GM12878 (cell line): ENCODE measurements at regions of chr19 and their contacts with region 1.

Region 1: GRCh38 chr19:38335949-38336637 is 463 bp downstream of the CATSPERG start:
- DNase-seq: peak; percentile 80
- ATAC-seq: peak; percentile 90
- H3K4me3 ChIP-seq: peak overlapping the region; percentile 79
- H3K27ac ChIP-seq: peak overlapping the region; percentile 91
- H3K4me1 ChIP-seq: peaks cover 3% of the 10 kb centered on the region; the same call in 1 of the 2 replicates
- H3K27me3 ChIP-seq: no peaks in the 10 kb centered on the region
- CTCF ChIP-seq: no peak
- EP300 ChIP-seq: no peak
- POLR2A ChIP-seq: peak; percentile 69; the same call in 1 of the 2 replicates
- RAD21 ChIP-seq: no peak

Region 2: DNA sequence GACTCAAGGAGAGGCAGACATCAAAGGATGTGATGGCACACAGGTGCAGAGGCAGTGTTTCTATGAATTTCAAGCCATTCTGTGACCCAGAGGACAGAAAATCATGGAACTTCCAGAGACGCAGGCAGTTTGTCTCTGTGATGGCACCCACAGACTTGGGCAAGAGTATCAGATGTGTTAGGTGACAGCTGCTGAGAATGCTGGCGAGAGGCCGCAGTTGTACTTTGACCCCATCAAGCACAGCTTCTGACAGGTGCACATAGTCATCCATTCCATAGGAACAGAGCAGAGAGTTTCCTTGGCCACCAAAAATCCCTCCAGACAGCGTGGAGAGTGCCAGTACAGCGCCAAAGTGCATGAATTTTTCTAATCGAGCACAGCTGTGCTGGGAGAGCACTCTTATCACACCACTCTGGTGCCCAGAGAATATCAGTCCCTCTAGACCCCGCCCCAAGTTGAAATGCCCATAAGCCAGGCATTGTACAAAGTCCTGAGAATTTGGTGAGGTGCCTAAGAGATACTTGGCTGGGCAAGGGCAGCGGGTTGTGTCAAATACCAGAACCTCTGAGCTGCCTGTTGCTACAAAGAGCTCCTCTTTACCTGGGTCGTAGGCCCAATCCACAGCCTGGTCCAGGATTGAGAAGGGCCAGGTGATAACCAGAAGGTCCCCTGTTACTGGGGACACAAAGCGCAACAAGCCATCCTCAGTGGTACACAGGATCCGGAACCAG is 442.1 kb before region 1 on chr19:
- CTCF ChIA-PET with region 1: interaction called, 4 read pairs
- POLR2A ChIA-PET with region 1: no interaction called
- RAD21 ChIA-PET with region 1: interaction called, 4 read pairs
- SMC1A ChIA-PET with region 1: interaction called, 3 read pairs
- in situ Hi-C with region 1: loop called (anchors 5 kb)
- intact Hi-C with region 1: no loop called
- DNase-seq: no peak
- ATAC-seq: no peak
- H3K4me3 ChIP-seq: no peak overlapping the region
- H3K27ac ChIP-seq: no peak overlapping the region
- H3K4me1 ChIP-seq: no peaks in the 10 kb centered on the region
- H3K27me3 ChIP-seq: peaks cover 0 to 2% of the 10 kb centered on the region in 2 experiments; a peak in 1 of 4 replicates
- CTCF ChIP-seq: no peak
- EP300 ChIP-seq: no peak
- POLR2A ChIP-seq: no peak
- RAD21 ChIP-seq: no peak

Region 3: GRCh38 chr19:38229585-38230073 is 106.5 kb before region 1 on chr19:
- CTCF ChIA-PET with region 1: interaction called, 10 read pairs
- POLR2A ChIA-PET with region 1: no interaction called
- RAD21 ChIA-PET with region 1: interaction called, 5 read pairs
- SMC1A ChIA-PET with region 1: interaction called, 14 read pairs
- in situ Hi-C with region 1: no loop called
- intact Hi-C with region 1: loop called (anchors 2 kb)
- DNase-seq: no peak
- ATAC-seq: peak; percentile 92
- H3K4me3 ChIP-seq: no peak overlapping the region
- H3K27ac ChIP-seq: no peak overlapping the region
- H3K4me1 ChIP-seq: 0 out of 2 replicates have a peak, but pooled peaks cover under 1% of the 10 kb centered on the region
- H3K27me3 ChIP-seq: peaks cover 6 to 8% of the 10 kb centered on the region in 2 experiments; a peak in 3 of 4 replicates
- CTCF ChIP-seq: no peak
- EP300 ChIP-seq: no peak
- POLR2A ChIP-seq: no peak
- RAD21 ChIP-seq: no peak

Region 4: DNA sequence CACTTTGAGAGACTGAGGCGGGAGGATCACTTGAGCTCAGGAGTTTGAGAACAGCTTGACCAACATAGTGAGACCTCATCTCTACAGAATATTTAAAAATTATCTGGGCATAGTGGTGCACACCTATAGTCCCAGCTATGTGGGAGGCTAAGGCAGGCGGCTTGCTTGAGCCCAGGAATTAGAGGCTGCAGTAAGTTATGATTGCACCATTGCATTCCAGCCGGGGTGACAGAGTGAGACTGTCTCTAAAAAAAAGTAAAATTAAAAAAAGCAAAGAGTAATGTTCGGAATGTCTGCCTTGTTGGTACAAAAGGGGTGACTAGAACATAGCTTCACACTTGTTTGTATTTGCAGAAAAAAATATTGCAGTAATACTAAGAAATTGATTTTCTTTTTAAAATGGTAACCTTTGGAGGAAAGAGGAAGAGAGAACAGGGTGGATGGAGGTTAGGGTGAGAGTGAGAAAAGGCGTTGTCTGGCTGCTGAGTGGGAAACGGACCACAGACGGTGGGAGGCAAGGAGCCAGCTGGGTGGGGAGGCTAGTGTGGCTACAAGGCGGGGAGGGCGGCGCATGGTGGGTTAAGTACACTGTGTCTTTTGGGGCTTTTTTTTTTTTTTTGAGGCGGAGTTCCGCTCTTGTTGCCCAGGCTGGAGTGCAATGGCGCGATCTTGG is 90.1 kb before region 1 on chr19:
- CTCF ChIA-PET with region 1: interaction called, 74 read pairs
- POLR2A ChIA-PET with region 1: no interaction called
- RAD21 ChIA-PET with region 1: interaction called, 18 read pairs
- SMC1A ChIA-PET with region 1: interaction called, 6 read pairs
- in situ Hi-C with region 1: loop called (anchors 5 kb)
- intact Hi-C with region 1: loop called (anchors 1 kb)
- DNase-seq: no peak
- ATAC-seq: no peak
- H3K4me3 ChIP-seq: no peak overlapping the region
- H3K27ac ChIP-seq: no peak overlapping the region
- H3K4me1 ChIP-seq: no peaks in the 10 kb centered on the region
- H3K27me3 ChIP-seq: no peaks in the 10 kb centered on the region
- CTCF ChIP-seq: no peak
- EP300 ChIP-seq: no peak
- POLR2A ChIP-seq: no peak
- RAD21 ChIP-seq: no peak

Region 5: GRCh38 chr19:38374429-38375176 is 38.5 kb after region 1 on chr19 and contains the start of gene PSMD8:
- CTCF ChIA-PET with region 1: interaction called, 34 read pairs
- POLR2A ChIA-PET with region 1: interaction called, 26 read pairs
- RAD21 ChIA-PET with region 1: interaction called, 30 read pairs
- SMC1A ChIA-PET with region 1: interaction called, 21 read pairs
- in situ Hi-C with region 1: loop called (anchors 5 kb)
- intact Hi-C with region 1: loop called (anchors 1 kb)
- DNase-seq: peak; percentile 99
- ATAC-seq: peak; percentile 99
- H3K4me3 ChIP-seq: peak within 1 kb of the TSS; percentile 81
- H3K27ac ChIP-seq: peak within 1 kb of the TSS; percentile 88
- H3K4me1 ChIP-seq: peaks cover 14% of the 10 kb centered on the region
- H3K27me3 ChIP-seq: peaks cover 0 to 2% of the 10 kb centered on the region in 2 experiments; a peak in 1 of 4 replicates
- CTCF ChIP-seq: peak in 2 of 3 experiments; percentile 19 to 42; a peak in 3 of 6 replicates
- EP300 ChIP-seq: no peak
- POLR2A ChIP-seq: peak; percentile 100
- RAD21 ChIP-seq: no peak
- polyA plus RNA-seq, gene PSMD8: 81.2 to 99.0 TPM